GM18951 (cell line): ENCODE measurements at regions of chr18 and their contacts with region 1.

Region 1: DNA sequence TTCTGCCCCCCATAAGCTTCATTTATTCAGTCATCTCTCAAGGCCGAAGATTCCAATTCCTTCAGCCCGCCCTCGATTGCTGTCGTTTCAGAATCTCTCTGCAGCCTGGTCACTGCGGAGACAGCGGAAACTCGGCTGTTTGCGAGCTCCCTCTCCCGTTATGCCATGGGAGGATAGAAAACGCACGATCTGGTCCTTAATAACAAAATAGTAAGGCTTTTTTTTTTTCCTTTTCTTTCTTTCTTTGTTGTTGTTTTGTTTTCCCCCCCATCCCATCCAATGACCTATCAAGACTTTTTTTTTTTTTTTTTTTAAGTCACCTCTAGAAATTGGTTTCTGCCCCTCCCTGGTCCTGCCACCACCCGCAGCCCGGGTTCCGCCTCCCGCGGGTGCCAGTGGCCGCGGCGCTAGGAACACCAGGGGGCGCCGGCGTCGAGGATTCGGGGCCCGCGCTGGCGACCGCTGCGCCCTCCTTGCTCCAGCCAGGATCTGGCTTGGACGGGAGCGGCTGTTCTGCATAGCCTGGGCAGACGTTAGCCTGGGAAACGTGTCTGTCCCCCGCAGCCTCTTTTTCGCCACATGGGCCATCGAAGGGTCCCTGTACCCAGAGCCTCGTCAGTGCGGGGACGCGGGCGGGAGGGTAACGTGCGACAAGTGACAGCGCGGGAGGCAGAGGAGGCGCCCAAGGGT is 10.1 kb downstream of the CPLX4 start:
- POLR2A ChIP-seq: no peak

Region 2: GRCh38 chr18:58998401-58999203 is 309.8 kb before region 1 on chr18:
- in situ Hi-C with region 1: no loop called
- POLR2A ChIP-seq: no peak

Region 3: GRCh38 chr18:59395226-59396110 is 87.1 kb after region 1 on chr18:
- in situ Hi-C with region 1: loop called (anchors 10 kb)
- POLR2A ChIP-seq: no peak